ENCODE measurements at regions of chr2 and their contacts with region 1.

Region 1: GRCh38 chr2:239049421-239050251 is 201.8 kb downstream of the TWIST2 start:
- DNase-seq: peak in 3 of 10 donors; percentile 16 to 32 (median 16)
- H3K4me3 ChIP-seq: no peak overlapping the region
- H3K27ac ChIP-seq: no peak overlapping the region
- H3K27me3 ChIP-seq: no peaks in the 10 kb centered on the region
- CTCF ChIP-seq: no peak

Region 2: GRCh38 chr2:238835726-238836301 is 213.8 kb before region 1 on chr2:
- intact Hi-C with region 1: no loop called
- DNase-seq: no peak
- H3K4me3 ChIP-seq: no peak overlapping the region
- H3K27ac ChIP-seq: no peak overlapping the region
- H3K27me3 ChIP-seq: peaks cover 0 to 14% (median 0%) of the 10 kb centered on the region in 45 donors
- CTCF ChIP-seq: no peak

Region 3: DNA sequence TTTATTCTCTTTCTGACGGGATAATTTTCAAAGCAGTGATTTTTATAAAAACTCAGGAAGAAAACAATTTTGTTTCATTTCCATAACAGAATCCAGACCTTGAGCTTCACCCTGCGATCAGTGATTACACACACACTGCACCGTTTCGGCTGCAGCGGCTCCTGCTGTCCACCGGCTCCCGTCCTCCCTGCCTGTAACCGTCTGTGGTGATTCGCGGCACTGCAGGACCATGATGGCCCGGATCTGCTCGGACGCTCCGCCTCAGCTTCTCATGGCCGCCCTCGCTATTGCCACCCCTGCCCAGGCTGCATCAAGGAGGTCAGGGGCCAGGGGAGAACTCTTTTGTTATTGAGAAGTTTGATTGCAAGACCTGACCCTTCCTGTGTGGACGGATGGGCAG is 44.3 kb after region 1 on chr2:
- intact Hi-C with region 1: loop called in 1 of 2 experiments (anchors 5 kb)
- DNase-seq: no peak
- H3K4me3 ChIP-seq: no peak overlapping the region
- H3K27ac ChIP-seq: peak overlapping the region in 27 of 59 donors; percentile 1 to 66 (median 36)
- H3K27me3 ChIP-seq: no peaks in the 10 kb centered on the region
- CTCF ChIP-seq: peak in 7 of 56 donors; percentile 8 to 24 (median 13)

Region 4: DNA sequence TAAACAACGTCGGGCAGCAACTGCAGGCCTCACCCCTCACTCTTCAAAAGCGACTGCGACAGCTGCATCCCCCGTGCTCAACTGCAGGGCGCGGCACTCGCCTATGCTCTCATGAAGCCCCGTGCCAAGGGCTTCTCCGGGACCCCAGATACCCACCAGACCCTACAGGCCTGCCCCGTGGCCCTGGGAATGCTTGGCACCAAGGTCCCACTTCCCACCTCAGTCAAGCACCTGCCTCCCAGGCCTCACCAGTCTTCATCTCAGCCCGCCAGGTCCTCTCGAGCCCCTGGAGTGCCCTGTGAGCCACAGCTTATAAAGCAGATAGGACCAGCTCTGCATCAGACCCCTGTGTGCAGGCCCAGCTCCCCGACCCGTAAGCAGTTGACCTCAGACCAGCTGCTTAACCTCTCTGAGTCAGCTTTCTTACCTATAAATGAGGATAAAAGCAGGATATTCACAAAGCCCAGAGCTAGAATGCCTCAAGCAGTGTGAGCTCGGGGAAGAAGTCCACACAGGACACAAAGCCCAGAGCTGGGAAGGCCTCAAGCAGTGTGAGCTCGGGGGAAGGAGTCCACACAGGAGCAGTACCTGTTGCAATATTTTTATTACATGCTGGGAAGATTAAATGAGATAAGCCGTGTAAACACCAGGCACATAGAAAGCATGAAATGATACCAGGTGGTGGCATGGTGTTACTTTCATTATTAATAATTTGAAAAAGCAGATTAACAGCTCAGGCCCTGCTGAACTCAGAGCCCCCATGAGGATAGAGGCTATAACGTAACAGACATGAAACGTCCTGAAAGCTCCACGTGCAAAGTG is 254.3 kb after region 1 on chr2:
- intact Hi-C with region 1: no loop called
- DNase-seq: peak in 5 of 10 donors; percentile 5 to 39 (median 22)
- H3K4me3 ChIP-seq: no peak overlapping the region
- H3K27ac ChIP-seq: peak overlapping the region in 4 of 59 donors; percentile 0 to 31 (median 18)
- H3K27me3 ChIP-seq: no peaks in the 10 kb centered on the region
- CTCF ChIP-seq: no peak

Region 5: GRCh38 chr2:239869383-239870155 is 819.9 kb after region 1 on chr2:
- intact Hi-C with region 1: no loop called
- DNase-seq: no peak
- H3K4me3 ChIP-seq: no peak overlapping the region
- H3K27ac ChIP-seq: no peak overlapping the region
- H3K27me3 ChIP-seq: no peaks in the 10 kb centered on the region
- CTCF ChIP-seq: no peak

Measured in dorsolateral prefrontal cortex (tissue), 120 donors.